ENCODE measurements at regions of chr19 and their contacts with region 1.

Region 1: DNA sequence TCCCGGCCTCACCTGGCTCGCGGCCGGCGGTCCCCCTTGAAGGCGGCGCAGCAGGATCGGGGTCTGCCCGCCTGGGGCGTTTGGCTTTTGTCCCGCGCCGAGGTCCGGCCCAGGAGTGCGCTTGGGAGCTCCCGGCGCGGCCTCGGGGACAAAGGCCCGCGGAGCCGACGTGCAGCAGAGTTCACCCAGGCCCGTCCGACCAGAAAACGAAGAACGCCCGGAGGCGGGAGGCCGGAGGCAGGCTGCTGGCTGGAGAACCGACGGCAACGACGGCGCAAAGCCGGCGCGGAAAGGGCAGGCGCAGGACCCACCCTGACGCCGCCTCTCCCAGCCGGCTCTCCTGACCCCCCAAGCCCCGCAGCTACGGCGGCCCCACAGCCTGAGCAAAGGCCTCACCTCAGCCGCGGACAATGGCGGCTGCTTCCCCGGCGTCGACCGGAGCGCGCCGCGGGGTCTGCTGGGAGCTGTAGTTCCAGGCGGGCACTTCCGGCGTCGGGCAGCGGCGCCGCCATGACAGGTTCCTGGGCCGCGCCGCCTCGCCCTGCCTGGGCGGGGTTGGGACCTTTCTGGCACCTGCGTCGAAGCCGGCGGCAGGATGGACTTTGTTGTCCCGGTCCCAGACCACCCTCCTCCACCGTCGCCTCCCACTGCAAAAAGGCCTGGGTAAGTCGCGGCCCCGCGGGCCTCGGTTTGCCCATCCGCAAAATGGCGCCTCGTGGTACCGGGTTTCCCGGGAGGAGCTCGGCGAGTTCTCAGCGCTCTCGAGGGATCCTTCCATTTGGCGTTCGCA is at the start of gene ZNF606:
- DNase-seq: peak; percentile 83 to 91 (median 86)
- H3K4me3 ChIP-seq: peak within 1 kb of the TSS; percentile 90
- H3K27ac ChIP-seq: peak within 1 kb of the TSS; percentile 72 to 86
- H3K4me1 ChIP-seq: peaks cover 10% of the 10 kb centered on the region
- H3K27me3 ChIP-seq: no peaks in the 10 kb centered on the region
- CTCF ChIP-seq: no peak
- EP300 ChIP-seq: no peak
- POLR2A ChIP-seq: peak; percentile 83
- total RNA-seq, gene ZNF606: 13.4 to 38.1 (median 28.0) TPM

Region 2: DNA sequence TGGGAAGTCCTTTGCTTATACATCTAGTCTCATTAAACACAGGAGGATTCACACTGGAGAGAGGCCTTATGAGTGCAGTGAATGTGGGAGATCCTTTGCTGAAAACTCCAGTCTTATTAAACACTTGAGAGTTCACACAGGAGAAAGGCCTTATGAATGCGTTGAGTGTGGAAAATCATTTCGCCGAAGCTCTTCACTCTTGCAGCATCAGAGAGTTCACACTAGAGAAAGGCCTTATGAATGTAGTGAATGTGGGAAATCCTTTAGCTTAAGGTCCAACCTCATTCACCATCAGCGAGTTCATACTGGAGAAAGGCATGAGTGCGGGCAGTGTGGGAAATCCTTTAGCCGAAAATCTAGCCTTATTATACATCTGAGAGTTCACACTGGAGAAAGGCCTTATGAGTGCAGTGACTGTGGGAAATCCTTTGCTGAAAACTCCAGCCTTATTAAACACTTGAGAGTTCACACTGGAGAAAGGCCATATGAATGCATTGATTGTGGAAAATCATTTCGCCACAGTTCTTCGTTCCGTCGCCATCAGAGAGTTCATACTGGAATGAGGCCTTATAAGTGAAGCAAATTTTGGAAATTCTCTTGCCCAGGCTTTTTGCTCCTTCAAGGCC is 223.2 kb before region 1 on chr19:
- intact Hi-C with region 1: no loop called
- DNase-seq: no peak
- H3K4me3 ChIP-seq: no peak overlapping the region
- H3K27ac ChIP-seq: no peak overlapping the region
- H3K4me1 ChIP-seq: no peaks in the 10 kb centered on the region
- H3K27me3 ChIP-seq: no peaks in the 10 kb centered on the region
- CTCF ChIP-seq: no peak
- EP300 ChIP-seq: no peak
- POLR2A ChIP-seq: no peak

Region 3: GRCh38 chr19:58044886-58045285 is 42.3 kb after region 1 on chr19:
- intact Hi-C with region 1: no loop called
- DNase-seq: no peak
- H3K4me3 ChIP-seq: no peak overlapping the region
- H3K27ac ChIP-seq: no peak overlapping the region
- H3K4me1 ChIP-seq: no peaks in the 10 kb centered on the region
- H3K27me3 ChIP-seq: no peaks in the 10 kb centered on the region
- CTCF ChIP-seq: no peak
- EP300 ChIP-seq: no peak
- POLR2A ChIP-seq: no peak

Region 4: GRCh38 chr19:58063712-58064111 is 61.1 kb after region 1 on chr19:
- intact Hi-C with region 1: loop called in 1 of 4 experiments (anchors 2 kb)
- DNase-seq: no peak
- H3K4me3 ChIP-seq: no peak overlapping the region
- H3K27ac ChIP-seq: no peak overlapping the region
- H3K4me1 ChIP-seq: peaks cover 4% of the 10 kb centered on the region
- H3K27me3 ChIP-seq: no peaks in the 10 kb centered on the region
- CTCF ChIP-seq: no peak
- EP300 ChIP-seq: no peak
- POLR2A ChIP-seq: no peak

Region 5: GRCh38 chr19:58091251-58091995 is 88.8 kb after region 1 on chr19:
- intact Hi-C with region 1: no loop called
- DNase-seq: no peak
- H3K4me3 ChIP-seq: no peak overlapping the region
- H3K27ac ChIP-seq: no peak overlapping the region
- H3K4me1 ChIP-seq: no peaks in the 10 kb centered on the region
- H3K27me3 ChIP-seq: no peaks in the 10 kb centered on the region
- CTCF ChIP-seq: no peak
- EP300 ChIP-seq: no peak
- POLR2A ChIP-seq: no peak

Region 6: DNA sequence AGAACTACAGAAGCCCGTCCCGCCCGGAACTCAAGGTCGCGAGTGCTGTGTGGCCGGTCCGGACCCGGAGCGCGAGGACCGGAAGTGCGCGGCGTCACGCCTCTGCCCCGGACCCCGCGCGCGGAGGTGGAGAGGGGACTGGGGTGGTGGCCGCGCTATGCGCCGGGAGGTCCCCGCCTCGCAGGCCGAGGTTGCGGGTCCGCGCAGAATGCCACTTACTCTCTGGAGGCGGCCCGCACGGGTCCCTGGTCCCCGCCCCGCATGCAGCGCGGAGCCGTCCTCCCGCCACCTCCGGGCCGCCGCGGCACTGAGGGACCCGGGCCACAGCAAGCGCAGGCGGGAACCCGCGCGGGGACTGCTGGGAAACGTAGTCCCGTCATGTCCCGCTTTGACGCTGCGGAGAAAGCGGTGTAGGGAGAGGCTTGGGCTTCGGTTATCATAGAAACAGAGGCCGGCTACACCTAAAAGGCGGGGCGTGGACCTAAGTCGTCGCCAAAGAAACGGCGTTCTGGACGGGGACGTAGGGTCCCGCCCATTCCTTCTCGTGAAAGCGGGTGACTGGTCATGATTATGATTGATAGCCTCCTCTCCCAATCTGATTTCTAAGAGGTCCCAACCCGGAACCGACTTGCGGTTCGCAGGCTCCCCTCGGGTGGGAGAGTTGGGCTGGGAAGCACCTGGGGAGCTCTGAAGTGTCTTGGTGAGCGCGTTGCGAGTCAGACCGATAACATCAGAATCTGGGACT is 378.3 kb after region 1 on chr19 and contains the start of gene ZNF837:
- intact Hi-C with region 1: no loop called
- DNase-seq: peak; percentile 97 to 99 (median 98)
- H3K4me3 ChIP-seq: peak within 1 kb of the TSS; percentile 71
- H3K27ac ChIP-seq: peak within 1 kb of the TSS; percentile 28 to 95
- H3K4me1 ChIP-seq: peaks cover 16% of the 10 kb centered on the region
- H3K27me3 ChIP-seq: no peaks in the 10 kb centered on the region
- CTCF ChIP-seq: peak in 2 of 3 donors; percentile 39 to 52
- EP300 ChIP-seq: peak; percentile 22
- POLR2A ChIP-seq: peak; percentile 80
- total RNA-seq, gene ZNF837: 1.4 to 3.2 (median 2.7) TPM